ENCODE measurements at regions of chr3 and their contacts with region 1.

Region 1: GRCh38 chr3:52070724-52071621 is 14.6 kb upstream of the DUSP7 start:
- DNase-seq: peak; percentile 55 to 87
- ATAC-seq: peak; percentile 90 to 97 (median 96)
- H3K4me3 ChIP-seq: peak overlapping the region; percentile 9
- H3K27ac ChIP-seq: peak overlapping the region; percentile 91
- H3K4me1 ChIP-seq: peaks cover 22% of the 10 kb centered on the region
- H3K27me3 ChIP-seq: no peaks in the 10 kb centered on the region
- CTCF ChIP-seq: peak; percentile 31

Region 2: GRCh38 chr3:52136513-52136912 is 65.5 kb after region 1 on chr3:
- intact Hi-C with region 1: loop called in 1 of 2 experiments (anchors 5 kb)
- DNase-seq: peak; percentile 53 to 67
- ATAC-seq: peak in 3 of 4 donors; percentile 57 to 75 (median 67)
- H3K4me3 ChIP-seq: no peak overlapping the region
- H3K27ac ChIP-seq: peak overlapping the region; percentile 67
- H3K4me1 ChIP-seq: peaks cover 30% of the 10 kb centered on the region
- H3K27me3 ChIP-seq: no peaks in the 10 kb centered on the region
- CTCF ChIP-seq: no peak

Measured in psoas muscle (tissue), 8 donors.